ENCODE measurements at regions of chr3 and their contacts with region 1.

Region 1: GRCh38 chr3:190120269-190121060 is at the start of gene P3H2:
- DNase-seq: peak; percentile 94
- H3K4me3 ChIP-seq: peak within 1 kb of the TSS; percentile 87 to 97 (median 96)
- H3K27ac ChIP-seq: peak within 1 kb of the TSS; percentile 89 to 96 (median 94)
- H3K4me1 ChIP-seq: peaks cover 0 to 54% (median 35%) of the 10 kb centered on the region in 4 donors
- H3K27me3 ChIP-seq: no peaks in the 10 kb centered on the region
- CTCF ChIP-seq: peak in 3 of 4 experiments; percentile 50 to 63 (median 54)
- EP300 ChIP-seq: no peak
- POLR2A ChIP-seq: peak; percentile 19 to 25
- total RNA-seq, gene P3H2: 29.6 to 41.7 (median 34.4) TPM

Region 2: DNA sequence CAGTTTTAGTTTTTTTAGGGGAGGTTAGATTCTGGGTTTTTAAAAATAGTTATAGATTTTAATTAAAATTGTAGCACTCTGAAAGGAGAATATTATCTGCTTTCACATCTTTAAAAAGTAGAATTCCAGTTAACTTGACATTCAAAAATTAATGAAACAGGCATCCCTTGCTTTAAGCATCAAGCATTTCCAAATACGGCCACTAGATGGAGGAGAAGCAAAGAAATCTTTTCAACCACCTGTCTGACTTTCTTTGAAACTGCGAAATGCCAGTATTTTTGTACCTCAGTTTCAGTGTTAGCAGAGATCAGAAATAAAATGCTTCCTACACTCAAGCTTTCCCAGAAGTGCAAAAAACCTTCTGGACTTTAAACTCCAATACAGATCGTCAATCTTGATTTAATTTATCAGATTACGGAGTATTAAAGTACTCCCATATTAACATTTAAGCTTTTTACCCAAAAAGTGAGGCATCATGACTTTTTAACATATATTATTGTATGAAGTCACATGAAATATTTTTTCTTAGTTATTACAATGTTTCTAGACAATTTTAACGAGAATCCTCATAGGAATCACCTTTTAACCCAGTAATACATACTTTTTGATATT is 153.1 kb before region 1 on chr3:
- intact Hi-C with region 1: loop called (anchors 1 kb)
- DNase-seq: no peak
- H3K4me3 ChIP-seq: no peak overlapping the region
- H3K27ac ChIP-seq: no peak overlapping the region
- H3K4me1 ChIP-seq: no peaks in the 10 kb centered on the region
- H3K27me3 ChIP-seq: no peaks in the 10 kb centered on the region
- CTCF ChIP-seq: peak; percentile 57 to 89 (median 80)
- EP300 ChIP-seq: peak in 1 of 4 donors; percentile 18
- POLR2A ChIP-seq: no peak

Region 3: GRCh38 chr3:190017521-190018288 is 102.8 kb before region 1 on chr3:
- intact Hi-C with region 1: loop called (anchors 5 kb)
- DNase-seq: no peak
- H3K4me3 ChIP-seq: no peak overlapping the region
- H3K27ac ChIP-seq: no peak overlapping the region
- H3K4me1 ChIP-seq: peaks cover 0 to 32% (median 10%) of the 10 kb centered on the region in 4 donors
- H3K27me3 ChIP-seq: no peaks in the 10 kb centered on the region
- CTCF ChIP-seq: peak in 1 of 4 experiments; percentile 35
- EP300 ChIP-seq: no peak
- POLR2A ChIP-seq: no peak

Region 4: DNA sequence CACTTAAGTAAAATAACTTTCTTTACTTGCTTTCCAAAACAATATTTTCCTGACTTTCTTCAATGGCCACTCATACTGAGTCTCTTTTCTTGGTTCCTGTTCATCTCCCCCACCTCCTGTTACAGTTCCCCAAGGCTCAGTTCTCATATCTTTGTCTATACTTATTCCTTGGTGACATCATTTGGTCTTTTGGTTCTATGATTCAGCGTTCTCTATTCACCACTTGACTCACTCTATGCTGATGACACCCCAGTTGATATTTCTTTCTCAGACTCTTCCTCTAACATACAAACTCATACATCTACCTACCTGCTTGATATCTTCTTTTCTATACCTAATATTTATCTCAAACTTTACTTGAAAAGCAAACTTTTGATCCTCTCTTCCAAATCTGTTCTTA is 85.3 kb after region 1 on chr3:
- intact Hi-C with region 1: loop called (anchors 5 kb)
- DNase-seq: no peak
- H3K4me3 ChIP-seq: no peak overlapping the region
- H3K27ac ChIP-seq: no peak overlapping the region
- H3K4me1 ChIP-seq: no peaks in the 10 kb centered on the region
- H3K27me3 ChIP-seq: no peaks in the 10 kb centered on the region
- CTCF ChIP-seq: no peak
- EP300 ChIP-seq: no peak
- POLR2A ChIP-seq: no peak

Region 5: DNA sequence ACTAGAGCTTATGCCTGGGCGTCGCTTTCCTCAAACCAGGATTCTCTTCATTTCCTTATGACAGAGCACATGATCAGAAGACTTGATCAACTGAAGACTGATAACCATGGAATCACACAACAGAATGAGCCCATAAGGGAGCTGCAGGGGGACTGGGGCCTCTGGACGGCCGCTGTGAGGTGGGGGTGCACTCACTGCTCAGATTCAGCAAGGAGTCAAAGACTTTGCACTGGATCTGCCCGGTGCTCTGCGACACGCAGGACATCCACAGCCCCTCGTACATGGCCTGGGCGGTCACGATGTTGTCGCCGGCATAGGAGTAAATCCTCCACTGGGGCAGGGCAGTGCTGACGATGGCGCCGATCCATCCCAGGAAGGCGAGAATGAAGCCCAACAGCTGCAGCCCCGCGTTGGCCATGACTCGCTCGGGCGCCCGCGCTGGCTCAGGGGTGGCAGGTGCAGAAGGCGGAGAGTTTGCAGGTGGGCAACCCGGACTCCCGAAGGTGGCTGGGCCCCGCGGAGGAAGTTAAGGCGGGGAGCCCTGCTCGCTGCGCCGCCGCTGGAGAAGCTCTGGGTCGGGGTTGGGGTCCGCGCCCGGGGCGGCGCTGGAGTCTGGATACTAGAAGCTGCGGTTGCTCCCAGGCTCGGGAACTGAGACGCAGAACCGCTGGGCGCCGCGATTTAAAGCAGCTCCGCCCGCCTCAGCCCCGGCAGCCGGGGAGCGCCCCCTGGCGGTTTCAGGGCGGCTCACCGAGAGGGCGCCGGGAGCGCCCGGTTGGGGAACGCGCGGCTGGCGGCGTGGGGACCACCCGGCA is 201.5 kb after region 1 on chr3 and contains the start of gene CLDN1:
- intact Hi-C with region 1: loop called (anchors 10 kb)
- DNase-seq: peak; percentile 88
- H3K4me3 ChIP-seq: peak within 1 kb of the TSS; percentile 25 to 55 (median 50)
- H3K27ac ChIP-seq: no peak within 1 kb of the TSS
- H3K4me1 ChIP-seq: peaks cover 0 to 22% (median 16%) of the 10 kb centered on the region in 4 donors
- H3K27me3 ChIP-seq: peaks cover 0 to 14% (median 9%) of the 10 kb centered on the region in 3 donors
- CTCF ChIP-seq: peak; percentile 59 to 99 (median 82)
- EP300 ChIP-seq: no peak
- POLR2A ChIP-seq: no peak
- total RNA-seq, gene CLDN1: 0.27 to 0.49 (median 0.32) TPM

Measured in sigmoid colon (tissue), 7 donors.